Breast epithelium (tissue), 4 donors: ENCODE measurements at regions of chr4 and their contacts with region 1.

Region 1: GRCh38 chr4:188930822-188931221 is 791.6 kb downstream of the TRIML1 start:
- DNase-seq: no peak
- H3K4me3 ChIP-seq: no peak overlapping the region
- H3K27ac ChIP-seq: no peak overlapping the region
- H3K4me1 ChIP-seq: no peaks in the 10 kb centered on the region
- H3K27me3 ChIP-seq: no peaks in the 10 kb centered on the region
- CTCF ChIP-seq: no peak
- POLR2A ChIP-seq: no peak

Region 2: GRCh38 chr4:188879598-188879997 is 51.2 kb before region 1 on chr4:
- intact Hi-C with region 1: loop called (anchors 2 kb)
- DNase-seq: no peak
- H3K4me3 ChIP-seq: no peak overlapping the region
- H3K27ac ChIP-seq: no peak overlapping the region
- H3K4me1 ChIP-seq: no peaks in the 10 kb centered on the region
- H3K27me3 ChIP-seq: no peaks in the 10 kb centered on the region
- CTCF ChIP-seq: no peak
- POLR2A ChIP-seq: no peak